ENCODE measurements at regions of chr16 and their contacts with region 1.

Region 1: DNA sequence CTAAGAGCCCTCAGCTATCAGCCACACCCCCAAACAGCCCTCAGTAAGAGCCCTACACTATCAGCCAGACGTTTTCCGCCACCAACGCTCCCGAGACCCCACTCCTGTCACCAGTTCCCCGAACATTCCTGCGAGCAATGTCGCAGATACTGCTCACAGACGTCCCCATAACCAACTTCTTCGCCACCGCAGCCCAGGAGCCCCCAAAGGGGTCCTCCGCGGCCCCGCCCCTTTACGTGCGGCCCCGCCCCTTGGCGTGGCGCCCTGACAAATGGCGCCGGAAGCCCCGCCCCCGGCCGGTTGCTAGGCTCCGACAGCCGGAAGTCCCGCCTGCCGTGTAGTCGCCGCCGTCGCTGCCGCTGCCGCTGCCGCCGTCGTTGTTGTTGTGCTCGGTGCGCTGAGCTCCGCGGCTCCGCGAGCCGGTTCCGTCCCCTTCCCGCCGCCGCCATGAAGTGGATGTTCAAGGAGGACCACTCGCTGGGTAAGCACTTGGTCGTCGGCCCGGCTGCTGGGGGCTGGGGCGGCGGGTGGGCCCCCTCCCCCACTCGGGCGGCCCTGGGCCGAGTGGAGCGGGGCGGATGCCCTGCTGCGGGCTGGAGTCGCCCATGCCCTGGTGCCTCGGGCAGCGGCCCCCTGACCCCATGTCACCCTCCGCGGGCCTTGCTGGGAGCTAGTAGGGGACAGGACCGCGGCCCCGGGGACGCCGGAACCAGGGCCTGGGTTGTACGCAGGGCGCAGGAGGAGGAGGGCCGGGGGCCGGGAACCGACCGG is at the start of gene GABARAPL2:
- DNase-seq: peak; percentile 89 to 94 (median 91)
- H3K4me3 ChIP-seq: peak within 1 kb of the TSS; percentile 85
- H3K4me3 Mint-ChIP-seq: peak within 1 kb of the TSS; percentile 92 to 100 (median 96)
- H3K27ac ChIP-seq: peak within 1 kb of the TSS; percentile 83
- H3K27ac Mint-ChIP-seq: peak within 1 kb of the TSS; percentile 89 to 100 (median 98)
- H3K4me1 ChIP-seq: peaks cover 36% of the 10 kb centered on the region
- H3K4me1 Mint-ChIP-seq: peaks cover 43 to 58% (median 54%) of the 10 kb centered on the region in 3 donors
- H3K27me3 ChIP-seq: no peaks in the 10 kb centered on the region
- H3K27me3 Mint-ChIP-seq: peaks cover 7 to 14% of the 10 kb centered on the region in 2 donors
- total RNA-seq, gene GABARAPL2: 61.7 to 66.2 TPM

Region 2: DNA sequence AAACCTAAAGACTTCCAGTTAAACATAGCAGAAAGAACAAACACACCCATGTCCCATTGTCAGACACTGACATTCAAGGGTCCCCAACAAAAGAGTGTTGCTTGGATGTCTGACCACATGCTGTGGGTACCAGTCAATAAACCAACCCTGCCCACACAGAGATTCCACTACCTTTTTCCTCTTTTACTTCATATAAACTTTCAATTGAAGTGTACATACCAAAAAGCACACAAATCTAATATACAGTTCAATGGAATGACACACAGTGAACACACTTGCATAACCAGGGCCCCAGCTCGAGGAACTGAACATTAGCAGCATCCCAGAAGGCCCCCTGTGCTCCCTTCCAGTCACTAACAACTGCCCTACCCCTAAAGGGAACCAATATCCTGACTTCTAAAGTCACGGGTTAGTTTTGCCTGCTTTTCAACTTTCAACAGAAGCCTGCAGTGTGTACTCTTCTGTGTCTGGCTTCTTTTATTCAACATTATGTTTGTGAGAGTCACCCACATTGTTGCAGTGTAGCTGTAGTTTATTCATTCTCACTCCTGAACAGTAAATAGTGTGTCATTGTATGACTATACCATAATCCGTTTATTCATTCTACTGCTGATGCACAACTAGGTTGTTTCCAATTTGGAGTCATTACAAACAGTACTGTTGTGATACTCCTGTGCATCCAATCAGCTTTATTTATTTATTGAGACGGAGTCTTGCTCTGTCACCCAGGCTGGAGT is 150.9 kb before region 1 on chr16:
- CTCF ChIA-PET with region 1: no interaction called
- POLR2A ChIA-PET with region 1: no interaction called
- DNase-seq: no peak
- H3K4me3 ChIP-seq: no peak overlapping the region
- H3K4me3 Mint-ChIP-seq: no peak overlapping the region
- H3K27ac ChIP-seq: no peak overlapping the region
- H3K27ac Mint-ChIP-seq: peak overlapping the region in 2 of 8 donors; percentile 3 to 70
- H3K4me1 ChIP-seq: no peaks in the 10 kb centered on the region
- H3K4me1 Mint-ChIP-seq: peaks cover 15 to 25% (median 25%) of the 10 kb centered on the region in 3 donors
- H3K27me3 ChIP-seq: no peaks in the 10 kb centered on the region
- H3K27me3 Mint-ChIP-seq: no peaks in the 10 kb centered on the region

Region 3: DNA sequence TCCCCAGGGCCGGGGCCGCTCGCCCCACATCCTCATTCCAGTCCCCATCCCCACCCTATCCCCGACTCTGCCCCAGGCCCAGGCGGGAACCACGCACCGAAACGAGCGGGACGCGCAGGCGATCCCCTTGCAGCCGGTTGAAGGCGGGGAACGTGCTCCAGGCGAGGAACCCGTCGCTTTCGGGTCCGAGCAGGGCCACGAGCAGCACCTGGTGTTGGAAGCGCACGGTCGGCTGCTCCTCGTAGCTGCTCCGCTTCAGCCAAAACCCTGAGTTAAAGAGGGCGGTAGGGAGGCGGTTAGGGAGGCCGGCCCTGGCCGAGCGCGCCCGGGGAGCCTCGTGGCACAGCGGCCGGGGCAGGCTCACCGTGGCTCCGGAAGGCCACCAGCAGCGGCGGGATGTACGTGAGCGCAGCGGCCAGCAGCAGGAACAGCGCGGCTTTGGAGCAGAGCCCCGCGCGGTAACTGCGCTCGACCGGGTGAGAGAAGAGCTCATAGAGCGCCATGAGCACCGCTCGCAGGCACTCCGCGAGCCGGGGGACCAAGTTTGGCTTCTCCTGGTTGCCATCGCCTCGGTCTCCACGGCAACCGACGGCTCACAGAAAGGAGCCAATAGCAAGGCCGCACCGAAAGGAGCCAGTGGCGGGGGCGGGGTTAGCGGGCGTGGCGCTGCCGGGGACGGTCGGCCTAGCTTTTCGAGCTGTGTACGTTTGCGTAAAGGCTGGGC is 10.4 kb before region 1 on chr16 and contains the start of gene TMEM231:
- CTCF ChIA-PET with region 1: interaction called, 12 read pairs
- POLR2A ChIA-PET with region 1: interaction called, 14 read pairs
- DNase-seq: peak; percentile 94 to 98 (median 96)
- H3K4me3 ChIP-seq: peak within 1 kb of the TSS; percentile 89
- H3K4me3 Mint-ChIP-seq: peak within 1 kb of the TSS; percentile 77 to 95 (median 87)
- H3K27ac ChIP-seq: peak within 1 kb of the TSS; percentile 58
- H3K27ac Mint-ChIP-seq: peak within 1 kb of the TSS; percentile 89 to 98 (median 94)
- H3K4me1 ChIP-seq: peaks cover 13% of the 10 kb centered on the region
- H3K4me1 Mint-ChIP-seq: peaks cover 7 to 17% (median 10%) of the 10 kb centered on the region in 3 donors
- H3K27me3 ChIP-seq: no peaks in the 10 kb centered on the region
- H3K27me3 Mint-ChIP-seq: no peaks in the 10 kb centered on the region
- total RNA-seq, gene TMEM231: 5.3 to 5.4 TPM

Region 4: GRCh38 chr16:75614066-75614897 is 48.1 kb after region 1 on chr16:
- CTCF ChIA-PET with region 1: interaction called, 11 read pairs
- POLR2A ChIA-PET with region 1: interaction called, 4 read pairs
- DNase-seq: no peak
- H3K4me3 ChIP-seq: no peak overlapping the region
- H3K4me3 Mint-ChIP-seq: peak overlapping the region in 4 of 7 donors; percentile 11 to 36 (median 14)
- H3K27ac ChIP-seq: peak overlapping the region; percentile 6
- H3K27ac Mint-ChIP-seq: peak overlapping the region; percentile 23 to 97 (median 72)
- H3K4me1 ChIP-seq: peaks cover 45% of the 10 kb centered on the region
- H3K4me1 Mint-ChIP-seq: peaks cover 45 to 75% (median 61%) of the 10 kb centered on the region in 3 donors
- H3K27me3 ChIP-seq: no peaks in the 10 kb centered on the region
- H3K27me3 Mint-ChIP-seq: peaks cover 0 to 2% of the 10 kb centered on the region in 2 donors

Measured in CD8-positive, alpha-beta memory T cell (primary cell).